PC-3 (cell line): ENCODE measurements at regions of chr20 and their contacts with region 1.

Region 1: DNA sequence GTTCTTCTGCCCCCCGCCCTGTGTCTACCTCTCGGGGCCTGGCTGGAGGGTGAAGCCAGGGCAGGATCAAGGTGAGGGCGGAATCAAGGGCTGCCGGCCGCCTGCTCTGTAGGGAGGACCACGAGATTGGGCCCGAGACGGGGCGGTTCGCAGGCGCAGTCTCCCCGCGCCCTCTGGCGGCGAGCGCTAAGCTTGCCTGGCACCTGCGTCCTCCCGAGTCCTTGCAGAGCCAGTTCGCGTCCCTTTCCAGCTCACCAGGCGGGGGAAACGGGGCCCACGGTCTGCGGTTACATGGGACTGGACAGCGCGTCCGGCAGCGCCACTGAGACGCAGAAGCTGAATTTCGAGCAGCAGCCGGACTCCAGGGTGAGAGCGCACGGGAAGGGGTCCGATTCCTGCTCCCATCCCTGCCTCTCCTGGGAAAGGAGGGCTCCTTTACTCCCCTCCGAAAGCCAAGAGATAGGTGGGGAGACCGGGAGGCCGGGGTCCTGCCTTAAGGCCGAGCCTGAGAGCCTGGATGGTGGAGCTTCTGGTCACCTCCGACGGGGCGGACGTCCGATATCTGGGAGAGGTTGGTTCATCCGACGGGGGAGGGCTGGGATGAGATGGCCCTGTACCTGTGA is 3.6 kb upstream of the MATN4 start:
- DNase-seq: peak; percentile 81
- ATAC-seq: peak; percentile 90
- H3K4me3 ChIP-seq: peak overlapping the region; percentile 2; the same call in 1 of the 2 replicates
- H3K27ac ChIP-seq: no peak overlapping the region
- H3K4me1 ChIP-seq: no peaks in the 10 kb centered on the region
- H3K27me3 ChIP-seq: no peaks in the 10 kb centered on the region
- CTCF ChIP-seq: peak; percentile 94

Region 2: DNA sequence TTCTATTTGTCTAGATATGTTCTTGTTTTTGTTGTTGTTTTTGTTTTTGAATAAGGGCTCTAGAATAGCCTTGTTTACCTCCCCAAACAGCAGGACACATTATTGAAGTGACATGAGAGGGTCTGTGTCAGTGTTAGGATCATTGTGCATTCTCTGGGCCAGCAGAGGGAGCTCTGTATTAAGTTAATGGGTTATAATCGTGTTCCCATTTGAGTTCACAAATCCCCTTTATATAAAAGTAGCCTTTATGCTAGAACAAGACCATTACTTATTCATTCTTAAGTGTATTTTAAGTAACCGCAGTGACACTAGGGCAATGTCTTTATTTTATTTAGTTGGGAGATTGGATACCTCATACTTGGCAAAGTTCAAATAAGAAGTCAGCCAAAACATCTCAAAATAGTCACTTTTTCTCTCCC is 300.6 kb before region 1 on chr20:
- CTCF ChIA-PET with region 1: no interaction called
- POLR2A ChIA-PET with region 1: no interaction called
- intact Hi-C with region 1: loop called (anchors 1 kb)
- DNase-seq: peak; percentile 84
- ATAC-seq: peak; percentile 88
- H3K4me3 ChIP-seq: no peak overlapping the region
- H3K27ac ChIP-seq: peak overlapping the region; percentile 48
- H3K4me1 ChIP-seq: peaks cover 24% of the 10 kb centered on the region
- H3K27me3 ChIP-seq: no peaks in the 10 kb centered on the region
- CTCF ChIP-seq: peak; percentile 98

Region 3: DNA sequence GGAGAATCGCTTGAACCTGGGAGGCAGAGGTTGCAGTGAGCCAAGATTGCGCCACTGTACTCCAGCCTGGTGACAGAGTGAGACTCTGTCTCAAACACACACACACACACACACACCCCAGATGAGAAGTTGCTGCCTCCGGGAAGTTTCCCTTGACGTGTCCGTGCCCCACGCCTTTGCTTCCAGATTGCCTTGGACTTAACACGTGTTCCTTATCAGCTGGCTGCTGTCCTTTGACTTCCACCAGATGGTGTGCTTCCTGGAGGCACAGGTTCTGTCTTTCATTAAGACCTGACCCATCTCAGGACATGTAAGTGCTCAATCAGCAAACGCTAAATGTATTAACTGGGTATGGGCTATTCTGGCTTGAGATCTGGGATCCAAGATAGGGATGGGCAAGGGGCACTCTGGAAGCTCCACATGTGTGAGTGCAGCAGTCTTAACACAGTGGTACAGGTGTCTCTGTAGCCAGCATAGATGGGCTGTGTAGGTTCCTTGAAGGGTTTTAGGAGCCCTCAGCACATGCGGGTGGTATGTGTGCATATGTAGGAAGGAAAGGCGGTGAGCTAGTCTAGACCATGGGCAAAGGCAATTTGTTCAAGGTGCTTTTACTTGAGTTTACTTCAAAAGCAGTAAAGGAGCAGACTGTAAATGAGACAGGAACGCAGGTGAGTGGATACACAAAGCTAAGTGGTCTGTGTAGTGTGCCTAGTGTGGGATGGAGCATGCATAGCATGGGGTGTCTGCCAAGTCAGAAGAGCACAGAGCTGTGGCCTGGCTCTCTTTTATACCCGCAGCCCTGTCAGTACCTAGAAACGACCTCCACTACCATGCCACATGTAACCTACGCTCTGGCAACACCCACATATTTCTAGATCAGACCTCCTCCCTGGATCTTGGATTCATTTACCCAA is 115.8 kb after region 1 on chr20:
- CTCF ChIA-PET with region 1: no interaction called
- POLR2A ChIA-PET with region 1: no interaction called
- intact Hi-C with region 1: no loop called
- DNase-seq: no peak
- ATAC-seq: no peak
- H3K4me3 ChIP-seq: no peak overlapping the region
- H3K27ac ChIP-seq: no peak overlapping the region
- H3K4me1 ChIP-seq: no peaks in the 10 kb centered on the region
- H3K27me3 ChIP-seq: no peaks in the 10 kb centered on the region
- CTCF ChIP-seq: no peak

Region 4: DNA sequence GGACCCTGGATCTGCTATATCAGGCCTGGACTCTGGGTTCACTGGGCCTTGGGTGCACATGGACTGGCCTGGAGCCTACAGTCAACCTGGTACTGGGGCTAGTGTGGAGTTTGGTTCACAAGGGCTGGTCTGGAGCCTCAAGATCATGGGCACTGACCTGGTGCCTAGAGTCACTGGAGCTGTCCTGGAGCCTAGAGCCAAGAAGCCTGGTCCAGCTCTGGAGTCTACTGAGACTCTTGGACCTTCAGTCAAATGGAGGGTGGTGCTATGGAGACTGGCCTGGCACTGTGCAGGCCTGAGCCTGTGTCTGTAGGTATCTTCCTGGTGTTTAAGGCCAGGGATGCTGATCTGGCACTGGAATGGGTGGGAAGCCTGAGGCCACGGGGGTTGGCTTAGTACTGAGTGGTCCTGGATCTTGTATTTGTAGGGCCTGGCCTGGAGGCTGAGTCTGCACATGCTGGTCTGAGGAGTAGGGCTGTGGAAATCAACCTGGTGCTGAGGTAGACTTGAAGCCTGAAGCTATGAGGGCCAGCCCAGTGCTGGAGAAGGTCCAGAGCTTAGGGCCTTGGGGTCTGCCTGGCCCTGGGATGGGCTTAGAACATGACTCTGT is 335.8 kb after region 1 on chr20:
- CTCF ChIA-PET with region 1: no interaction called
- POLR2A ChIA-PET with region 1: no interaction called
- intact Hi-C with region 1: no loop called
- DNase-seq: no peak
- ATAC-seq: no peak
- H3K4me3 ChIP-seq: no peak overlapping the region
- H3K27ac ChIP-seq: no peak overlapping the region
- H3K4me1 ChIP-seq: no peaks in the 10 kb centered on the region
- H3K27me3 ChIP-seq: 0 out of 2 replicates have a peak, but pooled peaks cover 5% of the 10 kb centered on the region
- CTCF ChIP-seq: no peak